ENCODE measurements at regions of chrX and their contacts with region 1.

Region 1: GRCh38 chrX:115616943-115617563 is 56.1 kb downstream of the PLS3 start:
- DNase-seq: no peak
- H3K4me3 Mint-ChIP-seq: no peak overlapping the region
- H3K27ac Mint-ChIP-seq: peak overlapping the region; percentile 21
- H3K4me1 Mint-ChIP-seq: peaks cover 19% of the 10 kb centered on the region
- H3K27me3 Mint-ChIP-seq: peaks cover 4% of the 10 kb centered on the region

Region 2: GRCh38 chrX:115579327-115579726 is 37.7 kb before region 1 on chrX:
- intact Hi-C with region 1: loop called (anchors 1 kb)
- DNase-seq: no peak
- H3K4me3 Mint-ChIP-seq: no peak overlapping the region
- H3K27ac Mint-ChIP-seq: no peak overlapping the region
- H3K4me1 Mint-ChIP-seq: peaks cover 4% of the 10 kb centered on the region
- H3K27me3 Mint-ChIP-seq: no peaks in the 10 kb centered on the region